Panc1 (cell line): ENCODE measurements at regions of chr18 and their contacts with region 1.

Region 1: DNA sequence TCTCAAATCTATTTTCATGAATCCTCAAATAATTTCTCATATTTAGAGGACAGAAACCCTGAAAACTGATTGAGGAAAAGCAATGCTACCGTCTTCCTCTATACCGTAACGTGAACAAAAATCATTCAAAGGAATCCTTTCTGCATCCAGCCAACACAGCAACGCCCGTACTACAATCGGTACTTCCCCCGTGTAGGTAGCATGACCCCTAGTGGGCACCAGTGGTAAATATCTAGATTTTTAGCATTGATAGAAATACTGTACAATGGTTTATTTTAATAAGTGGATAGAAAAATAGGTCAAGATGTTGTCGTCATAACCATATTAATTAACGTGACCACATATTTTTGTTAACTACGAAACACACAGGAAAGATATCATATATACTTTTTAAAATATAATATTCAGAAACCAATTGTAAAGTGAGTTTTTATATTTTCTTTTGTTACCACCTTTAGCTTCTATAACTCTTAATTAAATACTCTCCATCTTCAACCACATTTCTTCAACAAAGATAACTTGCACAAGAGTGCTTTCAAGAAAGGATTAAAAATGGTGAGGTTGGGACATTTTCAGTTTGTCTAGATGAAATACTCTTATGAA is 194.1 kb downstream of the SS18 start:
- DNase-seq: peak; percentile 8
- ATAC-seq: peak; percentile 73; the same call in 1 of the 2 replicates
- H3K4me3 ChIP-seq: no peak overlapping the region
- H3K27ac ChIP-seq: no peak overlapping the region
- H3K4me1 ChIP-seq: no peaks in the 10 kb centered on the region
- H3K27me3 ChIP-seq: peaks cover 2% of the 10 kb centered on the region; the same call in 1 of the 2 replicates
- CTCF ChIP-seq: peak; percentile 87

Region 2: DNA sequence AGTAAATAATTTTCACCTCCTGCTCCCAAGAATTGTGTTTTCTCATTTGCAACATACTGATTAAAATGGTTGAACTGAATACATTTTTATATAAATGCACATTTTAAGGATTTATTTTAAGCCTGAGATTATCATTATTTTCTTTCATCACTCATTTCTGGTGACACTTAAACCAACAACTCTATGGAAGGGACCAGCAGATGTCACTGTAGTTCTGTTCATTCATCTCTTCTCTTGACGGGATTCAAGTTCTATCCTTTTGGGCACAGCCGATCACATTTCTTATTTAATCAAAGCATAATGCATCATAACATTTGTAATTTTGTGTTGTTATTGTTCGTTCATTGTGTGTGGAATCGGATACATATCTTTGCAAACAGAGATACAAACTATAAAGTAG is 1018.0 kb before region 1 on chr18:
- CTCF ChIA-PET with region 1: no interaction called
- POLR2A ChIA-PET with region 1: no interaction called
- in situ Hi-C with region 1: no loop called
- intact Hi-C with region 1: loop called (anchors 10 kb)
- DNase-seq: no peak
- ATAC-seq: no peak; the same call in 1 of the 2 replicates
- H3K4me3 ChIP-seq: no peak overlapping the region
- H3K27ac ChIP-seq: no peak overlapping the region
- H3K4me1 ChIP-seq: no peaks in the 10 kb centered on the region
- H3K27me3 ChIP-seq: no peaks in the 10 kb centered on the region
- CTCF ChIP-seq: peak; percentile 46; the same call in 1 of the 2 replicates

Region 3: GRCh38 chr18:25695980-25696379 is 200.3 kb before region 1 on chr18:
- CTCF ChIA-PET with region 1: no interaction called
- POLR2A ChIA-PET with region 1: no interaction called
- in situ Hi-C with region 1: no loop called
- intact Hi-C with region 1: loop called (anchors 10 kb)
- DNase-seq: no peak
- ATAC-seq: no peak
- H3K4me3 ChIP-seq: no peak overlapping the region
- H3K27ac ChIP-seq: no peak overlapping the region
- H3K4me1 ChIP-seq: no peaks in the 10 kb centered on the region
- H3K27me3 ChIP-seq: no peaks in the 10 kb centered on the region
- CTCF ChIP-seq: no peak

Region 4: GRCh38 chr18:25832001-25832604 is 64.2 kb before region 1 on chr18:
- CTCF ChIA-PET with region 1: no interaction called
- POLR2A ChIA-PET with region 1: no interaction called
- in situ Hi-C with region 1: no loop called
- intact Hi-C with region 1: loop called (anchors 10 kb)
- DNase-seq: peak; percentile 38
- ATAC-seq: peak; percentile 88
- H3K4me3 ChIP-seq: no peak overlapping the region
- H3K27ac ChIP-seq: no peak overlapping the region
- H3K4me1 ChIP-seq: no peaks in the 10 kb centered on the region
- H3K27me3 ChIP-seq: no peaks in the 10 kb centered on the region; the same call in 1 of the 2 replicates
- CTCF ChIP-seq: peak; percentile 86